ENCODE measurements at regions of chr20 and their contacts with region 1.

Region 1: GRCh38 chr20:50663095-50663850 is 28.1 kb downstream of the RIPOR3 start:
- DNase-seq: peak; percentile 82 to 88
- H3K4me3 ChIP-seq: no peak overlapping the region
- H3K4me3 Mint-ChIP-seq: no peak overlapping the region
- H3K27ac Mint-ChIP-seq: peak overlapping the region; percentile 87
- H3K4me1 ChIP-seq: peaks cover 88% of the 10 kb centered on the region
- H3K4me1 Mint-ChIP-seq: peaks cover 84% of the 10 kb centered on the region
- H3K27me3 ChIP-seq: no peaks in the 10 kb centered on the region
- H3K27me3 Mint-ChIP-seq: no peaks in the 10 kb centered on the region
- CTCF ChIP-seq: peak; percentile 82 to 93

Region 2: GRCh38 chr20:50478162-50479036 is 184.9 kb before region 1 on chr20:
- CTCF ChIA-PET with region 1: no interaction called
- POLR2A ChIA-PET with region 1: no interaction called
- intact Hi-C with region 1: no loop called
- DNase-seq: peak; percentile 91 to 92
- H3K4me3 ChIP-seq: no peak overlapping the region
- H3K4me3 Mint-ChIP-seq: no peak overlapping the region
- H3K27ac Mint-ChIP-seq: no peak overlapping the region
- H3K4me1 ChIP-seq: peaks cover 14% of the 10 kb centered on the region
- H3K4me1 Mint-ChIP-seq: peaks cover 7% of the 10 kb centered on the region
- H3K27me3 ChIP-seq: no peaks in the 10 kb centered on the region
- H3K27me3 Mint-ChIP-seq: no peaks in the 10 kb centered on the region
- CTCF ChIP-seq: peak; percentile 92 to 97

Region 3: DNA sequence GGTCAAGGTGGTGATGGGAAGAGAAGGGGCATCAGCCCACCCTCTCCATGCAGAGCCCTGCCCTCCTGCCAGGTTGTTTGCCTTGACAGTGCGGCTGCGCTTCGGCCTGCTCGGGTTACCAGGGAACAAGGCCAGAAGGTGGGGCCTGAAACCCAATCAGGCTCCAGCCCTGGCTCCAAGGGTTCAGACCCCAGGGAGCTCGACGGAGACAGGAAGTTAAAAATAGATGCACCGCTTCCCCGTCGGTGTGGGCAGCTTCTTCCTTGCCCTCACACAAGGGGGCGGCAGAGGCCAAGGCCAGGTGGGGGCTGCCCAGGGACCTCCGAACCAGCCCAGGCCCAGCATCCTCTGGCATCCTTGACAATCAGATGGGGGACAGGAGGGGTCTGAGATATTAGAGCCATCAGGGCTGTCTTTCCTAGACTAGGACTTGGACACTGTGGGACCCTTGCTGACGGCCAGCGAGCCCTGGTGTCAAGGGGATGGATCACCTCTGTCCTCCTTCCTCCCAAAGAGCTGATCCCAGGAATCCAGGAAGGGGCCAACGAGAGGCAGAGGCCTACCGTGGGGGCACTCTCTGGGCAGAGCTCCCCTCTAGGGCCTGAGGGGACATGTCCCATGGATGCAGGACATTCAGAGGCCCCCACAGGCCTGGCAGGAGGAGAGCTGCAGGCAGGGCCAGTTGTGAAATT is 37.1 kb before region 1 on chr20:
- CTCF ChIA-PET with region 1: interaction called, 16 read pairs
- POLR2A ChIA-PET with region 1: interaction called, 7 read pairs
- intact Hi-C with region 1: loop called (anchors 1 kb)
- DNase-seq: peak; percentile 85 to 91
- H3K4me3 ChIP-seq: no peak overlapping the region
- H3K4me3 Mint-ChIP-seq: no peak overlapping the region
- H3K27ac Mint-ChIP-seq: peak overlapping the region; percentile 23
- H3K4me1 ChIP-seq: peaks cover 41% of the 10 kb centered on the region
- H3K4me1 Mint-ChIP-seq: peaks cover 12% of the 10 kb centered on the region
- H3K27me3 ChIP-seq: no peaks in the 10 kb centered on the region
- H3K27me3 Mint-ChIP-seq: no peaks in the 10 kb centered on the region
- CTCF ChIP-seq: peak; percentile 96 to 97

Region 4: DNA sequence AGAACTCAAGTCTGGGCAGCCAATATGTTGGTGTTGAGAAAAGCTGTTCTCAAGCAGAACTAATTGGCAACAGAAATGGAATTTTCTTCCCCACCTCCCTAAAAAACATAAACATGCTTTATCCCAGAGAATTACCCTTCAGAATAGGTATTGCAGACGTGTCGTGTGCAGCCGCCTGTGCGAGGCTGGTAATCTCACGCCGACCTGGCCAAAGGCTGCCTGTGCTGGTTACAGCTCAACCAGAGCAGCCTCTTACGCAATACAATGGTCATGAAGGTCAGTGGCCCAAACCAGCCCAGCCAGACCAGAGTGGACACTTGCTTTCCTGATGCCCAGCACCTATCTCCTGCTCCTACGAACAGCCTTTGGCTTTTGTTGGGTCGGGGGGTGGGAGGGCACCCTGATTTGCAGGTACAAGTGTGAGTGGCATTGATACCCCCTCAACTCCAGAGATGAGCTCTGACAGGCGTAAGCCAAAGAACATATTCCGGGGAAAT is 17.2 kb after region 1 on chr20:
- CTCF ChIA-PET with region 1: interaction called, 18 read pairs
- POLR2A ChIA-PET with region 1: interaction called, 3 read pairs
- intact Hi-C with region 1: no loop called
- DNase-seq: peak; percentile 90 to 93
- H3K4me3 ChIP-seq: no peak overlapping the region
- H3K4me3 Mint-ChIP-seq: peak overlapping the region; percentile 25
- H3K27ac Mint-ChIP-seq: peak overlapping the region; percentile 67
- H3K4me1 ChIP-seq: peaks cover 49% of the 10 kb centered on the region
- H3K4me1 Mint-ChIP-seq: peaks cover 45% of the 10 kb centered on the region
- H3K27me3 ChIP-seq: no peaks in the 10 kb centered on the region
- H3K27me3 Mint-ChIP-seq: no peaks in the 10 kb centered on the region
- CTCF ChIP-seq: no peak

Region 5: GRCh38 chr20:50701551-50701963 is 38.3 kb after region 1 on chr20:
- CTCF ChIA-PET with region 1: interaction called, 20 read pairs
- POLR2A ChIA-PET with region 1: interaction called, 7 read pairs
- intact Hi-C with region 1: loop called (anchors 1 kb)
- DNase-seq: no peak
- H3K4me3 ChIP-seq: no peak overlapping the region
- H3K4me3 Mint-ChIP-seq: no peak overlapping the region
- H3K27ac Mint-ChIP-seq: peak overlapping the region; percentile 88
- H3K4me1 ChIP-seq: peaks cover 41% of the 10 kb centered on the region
- H3K4me1 Mint-ChIP-seq: peaks cover 46% of the 10 kb centered on the region
- H3K27me3 ChIP-seq: no peaks in the 10 kb centered on the region
- H3K27me3 Mint-ChIP-seq: no peaks in the 10 kb centered on the region
- CTCF ChIP-seq: no peak

Region 6: DNA sequence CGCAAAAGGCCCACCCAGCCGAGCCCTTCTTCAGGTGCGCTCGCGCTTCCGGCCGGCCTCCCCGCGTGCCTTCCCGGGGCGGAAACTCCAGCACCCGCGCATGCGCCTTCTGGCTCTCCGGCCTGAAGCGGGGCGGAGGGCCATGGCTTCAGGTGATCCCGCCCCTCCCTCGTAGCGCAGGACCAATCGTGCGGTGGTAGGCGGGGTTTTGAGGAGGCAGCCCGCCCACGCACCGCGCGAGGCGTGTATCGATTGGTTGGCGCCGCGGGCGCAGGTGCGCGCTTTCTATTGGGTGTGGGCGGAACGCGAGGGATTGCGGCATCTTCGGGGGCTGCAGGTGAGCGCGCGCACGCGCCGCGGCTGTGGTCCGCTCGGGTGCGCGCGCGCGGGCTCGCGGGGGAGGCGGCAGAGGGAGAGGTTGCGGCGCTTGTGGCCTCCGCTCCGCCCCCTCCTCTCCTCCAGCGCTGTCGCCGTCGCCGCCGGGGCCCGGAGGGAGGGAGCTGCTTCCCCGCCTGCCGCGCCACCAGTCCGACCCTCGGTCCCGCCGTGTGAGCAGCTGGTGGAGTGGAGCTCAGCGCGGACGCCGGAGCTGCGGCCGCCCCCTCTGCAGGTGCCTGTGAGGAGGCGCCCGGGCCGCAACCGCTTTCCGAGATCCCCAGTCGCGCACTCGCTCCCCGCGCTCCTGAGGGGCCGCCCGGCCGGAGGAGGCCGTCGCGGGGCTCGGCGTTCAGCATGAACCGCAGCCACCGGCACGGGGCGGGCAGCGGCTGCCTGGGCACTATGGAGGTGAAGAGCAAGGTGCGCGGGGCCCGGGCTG is 68.0 kb after region 1 on chr20 and contains the start of gene PARD6B:
- CTCF ChIA-PET with region 1: interaction called, 31 read pairs
- POLR2A ChIA-PET with region 1: interaction called, 36 read pairs
- intact Hi-C with region 1: loop called (anchors 1 kb)
- DNase-seq: peak; percentile 100
- H3K4me3 ChIP-seq: peak within 1 kb of the TSS; percentile 78
- H3K4me3 Mint-ChIP-seq: peak within 1 kb of the TSS; percentile 88
- H3K27ac Mint-ChIP-seq: peak within 1 kb of the TSS; percentile 96
- H3K4me1 ChIP-seq: peaks cover 67% of the 10 kb centered on the region
- H3K4me1 Mint-ChIP-seq: peaks cover 46% of the 10 kb centered on the region
- H3K27me3 ChIP-seq: no peaks in the 10 kb centered on the region
- H3K27me3 Mint-ChIP-seq: no peaks in the 10 kb centered on the region
- CTCF ChIP-seq: peak in 1 of 2 experiments; percentile 19
- total RNA-seq, gene PARD6B: 153 and 156 TPM in 2 replicates

Region 7: DNA sequence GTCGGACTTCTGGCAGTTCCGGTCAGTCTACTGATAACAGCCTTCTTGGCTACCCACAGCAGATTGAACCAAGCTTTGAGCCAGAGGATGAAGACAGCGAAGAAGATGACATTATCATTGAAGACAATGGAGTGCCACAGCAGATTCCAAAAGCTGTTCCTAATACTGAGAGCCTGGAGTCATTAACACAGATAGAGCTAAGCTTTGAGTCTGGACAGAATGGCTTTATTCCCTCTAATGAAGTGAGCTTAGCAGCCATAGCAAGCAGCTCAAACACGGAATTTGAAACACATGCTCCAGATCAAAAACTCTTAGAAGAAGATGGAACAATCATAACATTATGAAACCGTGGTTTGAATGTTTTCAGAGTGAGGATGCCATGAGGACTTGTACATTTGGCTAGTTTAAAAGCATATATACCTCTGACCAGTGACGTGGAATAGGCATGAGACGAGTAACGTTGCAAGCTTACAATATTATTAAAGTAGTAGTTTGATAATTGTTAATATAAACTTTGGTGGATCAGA is 86.9 kb after region 1 on chr20:
- CTCF ChIA-PET with region 1: interaction called, 88 read pairs
- POLR2A ChIA-PET with region 1: interaction called, 6 read pairs
- intact Hi-C with region 1: no loop called
- DNase-seq: peak in 1 of 2 experiments; percentile 21
- H3K4me3 ChIP-seq: no peak overlapping the region
- H3K4me3 Mint-ChIP-seq: no peak overlapping the region
- H3K27ac Mint-ChIP-seq: peak overlapping the region; percentile 57
- H3K4me1 ChIP-seq: peaks cover 60% of the 10 kb centered on the region
- H3K4me1 Mint-ChIP-seq: peaks cover 59% of the 10 kb centered on the region
- H3K27me3 ChIP-seq: no peaks in the 10 kb centered on the region
- H3K27me3 Mint-ChIP-seq: no peaks in the 10 kb centered on the region
- CTCF ChIP-seq: no peak

Region 8: DNA sequence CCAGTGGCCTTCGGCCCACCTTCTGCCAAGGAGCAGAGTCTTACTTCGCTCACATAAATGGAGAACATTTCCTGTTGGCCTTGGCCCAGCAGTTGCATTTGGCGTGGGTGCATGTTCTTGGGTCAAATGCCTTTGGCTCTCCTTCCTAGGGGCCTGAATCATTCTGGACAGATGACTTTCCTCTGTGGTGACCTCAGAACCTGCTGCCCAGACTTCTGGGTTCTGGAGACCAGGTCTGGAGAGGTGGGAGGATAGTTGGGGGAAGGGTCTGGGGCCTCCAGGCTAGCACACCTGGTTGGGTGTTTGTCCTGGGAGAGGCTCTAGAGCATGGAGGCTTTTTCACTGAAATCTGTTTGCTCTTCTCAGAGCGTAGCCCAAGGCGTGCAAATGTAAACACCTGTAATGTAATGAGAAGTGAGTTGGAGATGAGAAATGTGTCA is 160.9 kb after region 1 on chr20:
- CTCF ChIA-PET with region 1: no interaction called
- POLR2A ChIA-PET with region 1: no interaction called
- intact Hi-C with region 1: no loop called
- DNase-seq: no peak
- H3K4me3 ChIP-seq: no peak overlapping the region
- H3K4me3 Mint-ChIP-seq: no peak overlapping the region
- H3K27ac Mint-ChIP-seq: no peak overlapping the region
- H3K4me1 ChIP-seq: no peaks in the 10 kb centered on the region
- H3K4me1 Mint-ChIP-seq: no peaks in the 10 kb centered on the region
- H3K27me3 ChIP-seq: no peaks in the 10 kb centered on the region
- H3K27me3 Mint-ChIP-seq: no peaks in the 10 kb centered on the region
- CTCF ChIP-seq: no peak